Posterior vena cava (tissue), 2 donors: ENCODE measurements at regions of chr10 and their contacts with region 1.

Region 1: GRCh38 chr10:67527354-67527753 is 168.6 kb downstream of the CTNNA3 start:
- DNase-seq: no peak

Region 2: GRCh38 chr10:67587771-67588170 is 60.4 kb after region 1 on chr10:
- intact Hi-C with region 1: loop called in 1 of 2 experiments (anchors 2 kb)
- DNase-seq: no peak